ENCODE measurements at regions of chr6 and their contacts with region 1.

Region 1: DNA sequence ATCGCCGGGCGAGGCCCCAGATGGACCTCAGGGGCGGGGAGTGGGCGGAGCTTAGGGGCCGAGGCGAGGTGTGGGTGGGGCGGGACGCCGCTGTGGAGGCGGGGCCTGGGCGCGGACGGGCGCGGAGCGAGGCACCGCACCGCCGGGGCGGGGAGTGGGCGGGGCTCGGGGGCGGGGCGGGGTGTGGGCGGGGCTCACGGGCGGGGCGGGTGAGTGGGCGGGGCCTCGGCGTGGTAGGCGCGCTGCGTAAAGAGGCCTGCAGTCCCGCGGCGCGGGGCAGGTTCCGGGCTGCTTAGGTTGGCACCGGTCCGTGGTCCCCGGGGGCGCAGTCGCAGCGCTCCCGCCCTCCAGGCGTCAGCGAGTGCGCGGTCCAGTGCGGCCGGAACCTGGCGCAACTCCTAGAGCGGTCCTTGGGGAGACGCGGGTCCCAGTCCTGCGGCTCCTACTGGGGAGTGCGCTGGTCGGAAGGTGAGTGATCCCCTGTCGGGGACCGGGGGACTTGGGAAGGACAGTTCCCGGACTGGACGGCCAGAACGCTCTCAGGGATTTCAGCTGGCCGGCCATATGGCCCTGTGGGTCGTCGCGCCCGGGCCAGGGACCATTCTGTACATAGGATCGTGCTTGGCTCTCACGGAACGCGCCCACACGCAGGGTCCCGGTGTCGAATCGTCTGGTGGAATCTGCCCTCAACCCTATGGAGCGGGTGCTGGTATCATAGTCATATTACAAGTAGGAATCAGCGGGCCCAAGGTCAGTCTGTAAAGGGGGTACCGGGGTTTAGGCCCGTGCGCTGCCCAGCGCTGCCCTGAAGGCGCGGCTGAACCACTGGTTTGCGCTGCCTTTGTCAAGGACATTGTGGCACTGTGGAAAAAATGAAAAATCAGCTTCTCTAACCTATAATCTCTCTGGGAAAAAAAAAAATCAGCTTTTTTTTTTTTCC is at the start of gene NQO2:
- DNase-seq: peak; percentile 95
- ATAC-seq: peak; percentile 88
- H3K4me3 Mint-ChIP-seq: peak within 1 kb of the TSS; percentile 86
- H3K27ac Mint-ChIP-seq: peak within 1 kb of the TSS; percentile 91
- H3K4me1 Mint-ChIP-seq: peaks cover 32% of the 10 kb centered on the region
- H3K27me3 Mint-ChIP-seq: peaks cover 7% of the 10 kb centered on the region
- total RNA-seq, gene NQO2: 11.9 to 14.5 TPM

Region 2: GRCh38 chr6:3013901-3014674 is 14.2 kb after region 1 on chr6:
- CTCF ChIA-PET with region 1: interaction called, 15 read pairs
- DNase-seq: no peak
- ATAC-seq: no peak
- H3K4me3 Mint-ChIP-seq: no peak overlapping the region
- H3K27ac Mint-ChIP-seq: no peak overlapping the region
- H3K4me1 Mint-ChIP-seq: peaks cover 9% of the 10 kb centered on the region
- H3K27me3 Mint-ChIP-seq: no peaks in the 10 kb centered on the region

Region 3: DNA sequence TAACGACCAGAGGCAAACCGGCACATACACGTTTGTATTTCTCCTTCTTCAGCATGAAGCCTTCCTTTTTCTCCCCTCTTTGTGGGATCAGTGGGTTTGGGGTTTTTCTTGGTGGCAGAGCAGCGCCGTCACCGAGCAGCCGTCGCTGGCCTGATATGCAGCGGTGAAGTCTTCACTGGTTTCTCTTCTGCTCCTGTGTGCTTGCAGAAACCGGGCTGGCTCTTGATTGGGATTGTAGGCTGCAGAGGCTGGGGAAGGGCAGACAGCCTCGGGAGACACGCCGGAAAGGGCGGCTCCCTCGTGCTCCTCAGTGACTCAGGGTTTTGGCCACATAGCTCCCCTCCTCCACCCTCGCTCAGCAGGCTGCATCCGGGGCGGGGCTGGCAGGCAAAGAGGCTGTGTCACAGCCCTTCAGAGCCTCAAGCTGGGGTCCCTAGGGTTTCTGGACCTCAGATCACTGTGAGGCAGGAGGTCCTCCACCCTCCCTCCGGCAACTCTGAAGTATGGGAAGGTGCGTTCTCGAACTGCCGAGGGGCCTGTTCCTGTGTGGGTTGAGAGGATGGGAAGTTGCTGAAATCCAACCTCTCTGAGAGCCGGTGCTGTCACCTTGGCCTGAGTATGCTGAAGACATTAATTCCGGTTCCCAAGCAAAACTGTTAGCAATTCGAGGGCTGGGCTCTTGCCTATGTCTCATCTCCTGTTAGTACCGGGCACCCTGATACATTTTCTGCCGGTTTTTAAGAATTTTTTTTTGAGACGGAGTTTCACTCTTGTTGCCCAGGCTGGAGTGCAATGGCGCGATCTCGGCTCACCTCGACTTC is 24.0 kb after region 1 on chr6:
- CTCF ChIA-PET with region 1: interaction called, 56 read pairs
- DNase-seq: peak; percentile 96
- ATAC-seq: peak; percentile 93
- H3K4me3 Mint-ChIP-seq: peak overlapping the region; percentile 79
- H3K27ac Mint-ChIP-seq: peak overlapping the region; percentile 90
- H3K4me1 Mint-ChIP-seq: peaks cover 67% of the 10 kb centered on the region
- H3K27me3 Mint-ChIP-seq: peaks cover 5% of the 10 kb centered on the region

Region 4: GRCh38 chr6:3052481-3053230 is 52.8 kb after region 1 on chr6:
- CTCF ChIA-PET with region 1: interaction called, 52 read pairs
- DNase-seq: no peak
- ATAC-seq: no peak
- H3K4me3 Mint-ChIP-seq: peak overlapping the region; percentile 72
- H3K27ac Mint-ChIP-seq: peak overlapping the region; percentile 66
- H3K4me1 Mint-ChIP-seq: peaks cover 25% of the 10 kb centered on the region
- H3K27me3 Mint-ChIP-seq: peaks cover 25% of the 10 kb centered on the region

Region 5: GRCh38 chr6:3205913-3206312 is 206.0 kb after region 1 on chr6:
- CTCF ChIA-PET with region 1: no interaction called
- DNase-seq: no peak
- ATAC-seq: no peak
- H3K4me3 Mint-ChIP-seq: no peak overlapping the region
- H3K27ac Mint-ChIP-seq: no peak overlapping the region
- H3K4me1 Mint-ChIP-seq: peaks cover 20% of the 10 kb centered on the region
- H3K27me3 Mint-ChIP-seq: peaks cover 12% of the 10 kb centered on the region

Measured in activated CD8-positive, alpha-beta memory T cell treated with anti-CD3 and anti-CD28 coated beads, Interleukin-2, amount 10 ng/mL, durations not matched to agents 7 days and 5 days (primary cell).